Dendritic cell treated with granulocyte-macrophage colony-stimulating factor and Interleukin-4, amounts not matched to agents 40 ng/mL and 50 ng/mL, for 4 days (primary cell): ENCODE measurements at regions of chr12 and their contacts with region 1.

Region 1: GRCh38 chr12:50572271-50572670 is 67.5 kb downstream of the DIP2B start:
- H3K4me3 Mint-ChIP-seq: peak overlapping the region; percentile 34
- H3K27ac Mint-ChIP-seq: peak overlapping the region; percentile 82
- H3K4me1 Mint-ChIP-seq: peaks cover 72% of the 10 kb centered on the region
- H3K27me3 Mint-ChIP-seq: no peaks in the 10 kb centered on the region

Region 2: GRCh38 chr12:49838973-49839633 is 733.2 kb before region 1 on chr12:
- intact Hi-C with region 1: no loop called
- H3K4me3 Mint-ChIP-seq: no peak overlapping the region
- H3K27ac Mint-ChIP-seq: no peak overlapping the region
- H3K4me1 Mint-ChIP-seq: peaks cover 40% of the 10 kb centered on the region
- H3K27me3 Mint-ChIP-seq: no peaks in the 10 kb centered on the region

Region 3: DNA sequence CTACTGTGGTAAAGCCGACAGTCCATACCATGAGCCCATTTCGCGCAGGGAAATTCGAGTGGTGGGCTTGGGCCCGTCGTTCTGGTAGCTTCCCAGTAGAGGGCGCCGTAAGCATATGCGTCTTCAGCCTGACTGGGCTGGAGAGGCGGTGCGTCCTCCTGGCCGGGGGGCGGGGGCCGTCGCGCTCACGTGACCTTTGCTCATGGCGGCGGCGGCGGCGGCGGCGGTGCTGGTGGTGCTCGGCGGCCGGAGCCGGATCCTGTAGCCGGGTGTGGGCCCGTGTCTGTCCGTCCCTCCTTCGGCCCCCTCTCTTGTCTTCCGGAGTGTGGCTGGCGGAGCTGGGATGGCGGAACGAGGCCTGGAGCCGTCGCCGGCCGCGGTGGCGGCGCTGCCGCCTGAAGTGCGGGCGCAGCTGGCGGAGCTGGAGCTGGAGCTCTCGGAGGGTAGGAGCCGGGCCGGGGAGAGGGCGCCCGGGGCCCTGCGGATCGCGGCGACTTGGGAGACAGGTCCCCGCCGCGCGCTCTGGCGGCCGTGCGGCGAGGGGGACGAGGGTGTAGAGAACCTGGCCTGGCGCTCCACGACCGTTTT is 67.4 kb before region 1 on chr12 and contains the start of gene DIP2B:
- intact Hi-C with region 1: loop called (anchors 5 kb)
- H3K4me3 Mint-ChIP-seq: peak within 1 kb of the TSS; percentile 94
- H3K27ac Mint-ChIP-seq: peak within 1 kb of the TSS; percentile 95
- H3K4me1 Mint-ChIP-seq: peaks cover 33% of the 10 kb centered on the region
- H3K27me3 Mint-ChIP-seq: no peaks in the 10 kb centered on the region

Region 4: DNA sequence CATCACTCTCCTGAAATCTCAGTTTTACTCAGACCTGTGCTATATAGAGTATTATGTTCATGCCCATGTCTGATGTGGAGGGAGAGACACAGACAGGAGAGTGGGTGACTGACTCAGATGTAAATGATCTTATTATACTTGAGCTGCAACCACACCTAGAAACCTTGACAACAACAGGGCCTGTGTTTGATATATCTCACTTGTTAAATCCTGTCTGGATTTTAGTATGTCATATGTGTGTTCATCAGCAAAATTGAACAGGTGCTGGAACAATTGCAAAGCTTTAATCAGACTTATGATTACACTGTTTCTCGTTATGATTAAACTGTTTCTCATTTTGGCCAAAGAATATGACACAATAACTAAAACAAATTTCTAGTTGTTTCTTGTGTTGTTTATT is 29.8 kb before region 1 on chr12:
- intact Hi-C with region 1: loop called (anchors 5 kb)
- H3K4me3 Mint-ChIP-seq: no peak overlapping the region
- H3K27ac Mint-ChIP-seq: peak overlapping the region; percentile 45
- H3K4me1 Mint-ChIP-seq: peaks cover 33% of the 10 kb centered on the region
- H3K27me3 Mint-ChIP-seq: no peaks in the 10 kb centered on the region

Region 5: DNA sequence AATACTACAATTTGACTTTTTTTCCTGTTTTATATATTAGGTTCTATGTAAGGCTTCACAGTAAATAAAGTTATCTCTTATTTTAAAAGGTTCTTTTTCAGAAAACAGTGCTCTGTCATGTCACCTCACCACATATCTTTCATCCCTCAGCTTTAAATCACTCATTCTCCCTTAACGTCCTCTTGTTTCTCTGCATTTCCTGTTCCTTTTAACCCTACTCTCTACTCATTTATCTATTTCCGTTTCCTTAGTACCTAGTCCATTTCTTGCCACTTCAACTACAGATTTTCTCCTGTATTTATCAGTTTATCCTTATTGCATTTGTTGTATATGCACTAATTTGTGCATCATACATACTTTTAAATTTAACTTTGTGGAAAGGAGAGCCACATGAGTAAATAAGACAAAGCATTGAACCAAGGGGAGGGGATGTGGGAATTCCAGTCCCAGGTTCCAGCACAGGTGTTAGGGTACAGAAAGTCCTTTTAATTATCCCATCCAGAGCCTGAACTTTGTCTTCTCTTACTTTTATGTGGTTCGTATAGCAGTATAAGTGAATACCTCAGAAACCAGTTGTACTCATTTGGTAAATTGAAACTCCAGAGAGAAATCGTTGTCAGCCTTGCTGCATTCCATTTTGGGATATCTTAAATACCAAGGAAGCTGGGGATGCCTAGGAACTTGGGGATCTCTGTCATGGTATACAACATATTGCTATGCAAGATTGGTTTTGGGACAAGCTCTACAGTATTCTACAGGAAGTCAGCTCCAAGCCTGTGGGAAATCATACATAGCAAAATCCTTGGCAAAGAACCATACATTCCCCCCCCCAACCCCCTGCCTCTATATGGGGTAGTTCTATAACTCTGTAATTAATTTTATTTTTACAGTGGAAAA is 53.0 kb after region 1 on chr12:
- intact Hi-C with region 1: loop called (anchors 5 kb)
- H3K4me3 Mint-ChIP-seq: no peak overlapping the region
- H3K27ac Mint-ChIP-seq: peak overlapping the region; percentile 43
- H3K4me1 Mint-ChIP-seq: peaks cover 64% of the 10 kb centered on the region
- H3K27me3 Mint-ChIP-seq: no peaks in the 10 kb centered on the region